CD8-positive, alpha-beta T cell (primary cell): ENCODE measurements at regions of chr9 and their contacts with region 1.

Region 1: DNA sequence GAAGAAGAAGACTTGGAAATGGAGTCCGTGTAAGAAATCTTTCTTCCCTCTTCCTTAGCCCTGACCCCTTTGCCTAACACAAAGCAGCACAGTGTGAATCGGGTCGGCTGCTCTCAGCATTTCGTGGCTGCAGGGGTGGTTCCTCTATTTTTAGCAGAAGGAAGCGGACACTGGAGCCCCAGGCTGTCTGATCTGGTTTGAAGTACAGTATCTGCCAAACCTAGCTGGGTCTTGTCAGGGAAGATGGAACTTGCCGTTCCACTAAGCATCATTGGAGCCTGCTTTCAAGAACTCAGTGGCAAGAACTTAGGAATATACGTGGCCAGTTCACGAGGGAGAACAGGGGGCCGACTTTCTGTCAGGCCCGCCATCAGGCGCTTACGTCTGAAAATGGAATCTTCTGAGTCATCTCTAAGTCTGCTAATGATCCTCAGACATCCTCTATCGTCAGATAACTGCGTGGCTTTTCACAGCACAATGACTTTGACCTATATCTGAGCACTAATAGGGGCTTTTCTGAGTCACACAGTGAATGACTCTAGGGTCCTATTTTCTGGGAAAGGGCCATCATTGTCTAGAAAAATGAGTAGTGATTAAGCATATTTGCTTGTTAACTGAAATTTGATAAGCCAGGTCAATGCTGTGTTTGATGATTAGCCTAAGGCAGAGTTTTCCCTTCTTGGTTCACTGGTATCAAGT is 43.3 kb upstream of the NCS1 start:
- DNase-seq: peak; percentile 12 to 91 (median 56)
- ATAC-seq: peak; percentile 73
- H3K4me3 ChIP-seq: peak overlapping the region; percentile 26 to 34
- H3K4me3 Mint-ChIP-seq: peak overlapping the region; percentile 80
- H3K27ac ChIP-seq: peak overlapping the region; percentile 75 to 94
- H3K27ac Mint-ChIP-seq: peak overlapping the region; percentile 98
- H3K4me1 ChIP-seq: peaks cover 52% of the 10 kb centered on the region
- H3K4me1 Mint-ChIP-seq: peaks cover 54% of the 10 kb centered on the region
- H3K27me3 ChIP-seq: no peaks in the 10 kb centered on the region
- H3K27me3 Mint-ChIP-seq: no peaks in the 10 kb centered on the region
- CTCF ChIP-seq: no peak

Region 2: GRCh38 chr9:129712634-129713401 is 416.1 kb before region 1 on chr9:
- CTCF ChIA-PET with region 1: no interaction called
- POLR2A ChIA-PET with region 1: no interaction called
- intact Hi-C with region 1: no loop called
- DNase-seq: no peak
- ATAC-seq: no peak
- H3K4me3 ChIP-seq: peak overlapping the region in 1 of 2 experiments; percentile 30
- H3K4me3 Mint-ChIP-seq: peak overlapping the region; percentile 32
- H3K27ac ChIP-seq: no peak overlapping the region
- H3K27ac Mint-ChIP-seq: no peak overlapping the region
- H3K4me1 ChIP-seq: peaks cover 28% of the 10 kb centered on the region
- H3K4me1 Mint-ChIP-seq: peaks cover 22% of the 10 kb centered on the region
- H3K27me3 ChIP-seq: peaks cover 0 to 5% of the 10 kb centered on the region in 2 experiments
- H3K27me3 Mint-ChIP-seq: peaks cover 12% of the 10 kb centered on the region
- CTCF ChIP-seq: no peak

Region 3: DNA sequence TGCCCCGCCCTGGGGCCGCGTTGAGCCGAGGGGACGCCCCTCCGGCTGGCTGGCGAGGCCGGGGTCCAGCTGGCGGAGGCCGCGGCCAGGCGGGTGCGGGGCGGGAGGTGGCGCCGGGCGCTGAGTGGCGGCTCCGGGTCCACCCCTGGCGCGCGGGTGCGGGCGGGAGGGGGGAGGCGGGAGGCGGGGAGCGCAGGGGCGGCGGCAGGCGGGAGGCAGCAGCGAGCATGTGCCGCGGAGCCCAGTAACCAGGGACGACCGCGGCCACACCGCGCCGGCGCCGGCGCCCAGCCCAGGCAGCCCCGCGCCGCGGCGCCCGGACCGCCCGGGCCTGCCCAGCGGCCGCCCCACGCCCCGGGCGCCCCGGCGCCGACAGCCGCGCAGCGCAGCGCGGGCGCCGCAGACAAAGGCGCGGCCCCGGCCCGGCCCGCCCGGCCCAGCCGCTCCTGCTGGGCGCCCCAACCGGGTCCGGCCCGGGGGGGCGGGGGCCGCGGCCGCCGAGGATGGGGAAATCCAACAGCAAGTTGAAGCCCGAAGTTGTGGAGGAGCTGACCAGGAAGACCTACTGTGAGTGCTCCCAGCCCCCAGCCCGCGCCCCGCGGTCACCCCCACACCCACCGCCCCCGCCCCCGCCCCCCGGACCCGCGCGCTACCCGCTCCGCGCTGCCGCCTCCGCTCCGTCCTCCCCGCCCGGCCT is 43.4 kb after region 1 on chr9 and contains the start of gene NCS1:
- CTCF ChIA-PET with region 1: no interaction called
- POLR2A ChIA-PET with region 1: no interaction called
- intact Hi-C with region 1: loop called in 1 of 2 experiments (anchors 5 kb)
- DNase-seq: peak in 8 of 9 experiments; percentile 10 to 63 (median 44)
- ATAC-seq: peak; percentile 67
- H3K4me3 ChIP-seq: peak within 1 kb of the TSS; percentile 7 to 23
- H3K4me3 Mint-ChIP-seq: peak within 1 kb of the TSS; percentile 79
- H3K27ac ChIP-seq: no peak within 1 kb of the TSS
- H3K27ac Mint-ChIP-seq: peak within 1 kb of the TSS; percentile 39
- H3K4me1 ChIP-seq: peaks cover 7% of the 10 kb centered on the region
- H3K4me1 Mint-ChIP-seq: peaks cover 10% of the 10 kb centered on the region
- H3K27me3 ChIP-seq: peaks cover 0 to 6% of the 10 kb centered on the region in 2 experiments
- H3K27me3 Mint-ChIP-seq: peaks cover 18% of the 10 kb centered on the region
- CTCF ChIP-seq: no peak
- total RNA-seq, gene NCS1: 2.6 to 3.8 TPM

Region 4: GRCh38 chr9:130235897-130236668 is 107.2 kb after region 1 on chr9:
- CTCF ChIA-PET with region 1: interaction called, 7 read pairs
- POLR2A ChIA-PET with region 1: no interaction called
- intact Hi-C with region 1: loop called in 1 of 2 experiments (anchors 5 kb)
- DNase-seq: peak; percentile 53 to 85 (median 70)
- ATAC-seq: peak; percentile 66
- H3K4me3 ChIP-seq: no peak overlapping the region
- H3K4me3 Mint-ChIP-seq: peak overlapping the region; percentile 42
- H3K27ac ChIP-seq: no peak overlapping the region
- H3K27ac Mint-ChIP-seq: no peak overlapping the region
- H3K4me1 ChIP-seq: peaks cover 5% of the 10 kb centered on the region
- H3K4me1 Mint-ChIP-seq: peaks cover 8% of the 10 kb centered on the region
- H3K27me3 ChIP-seq: no peaks in the 10 kb centered on the region
- H3K27me3 Mint-ChIP-seq: no peaks in the 10 kb centered on the region
- CTCF ChIP-seq: peak; percentile 98